Panc1 (cell line): ENCODE measurements at regions of chr1 and their contacts with region 1.

Region 1: DNA sequence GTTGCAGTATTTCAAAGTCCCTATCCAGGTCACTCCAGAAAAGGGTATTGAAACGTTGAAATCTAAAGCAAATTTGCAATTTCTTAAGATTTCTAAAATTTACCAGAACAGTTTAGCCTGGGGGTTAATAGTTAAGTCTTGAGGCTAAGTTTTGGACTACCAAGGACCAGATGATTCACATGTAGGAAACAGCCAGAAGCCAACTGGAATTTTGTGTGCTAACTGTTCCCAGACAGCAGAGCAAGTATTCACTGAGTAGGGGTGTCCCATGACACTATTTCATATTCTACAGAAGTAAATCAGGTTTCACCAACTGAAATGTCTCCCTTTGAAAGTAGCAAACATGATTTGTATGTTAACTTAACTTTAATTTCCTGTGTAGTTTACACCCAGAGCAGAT is 11.5 kb upstream of the C1orf105 start:
- DNase-seq: no peak
- ATAC-seq: no peak
- H3K4me3 ChIP-seq: no peak overlapping the region
- H3K27ac ChIP-seq: no peak overlapping the region
- H3K4me1 ChIP-seq: no peaks in the 10 kb centered on the region
- H3K27me3 ChIP-seq: no peaks in the 10 kb centered on the region
- CTCF ChIP-seq: no peak

Region 2: DNA sequence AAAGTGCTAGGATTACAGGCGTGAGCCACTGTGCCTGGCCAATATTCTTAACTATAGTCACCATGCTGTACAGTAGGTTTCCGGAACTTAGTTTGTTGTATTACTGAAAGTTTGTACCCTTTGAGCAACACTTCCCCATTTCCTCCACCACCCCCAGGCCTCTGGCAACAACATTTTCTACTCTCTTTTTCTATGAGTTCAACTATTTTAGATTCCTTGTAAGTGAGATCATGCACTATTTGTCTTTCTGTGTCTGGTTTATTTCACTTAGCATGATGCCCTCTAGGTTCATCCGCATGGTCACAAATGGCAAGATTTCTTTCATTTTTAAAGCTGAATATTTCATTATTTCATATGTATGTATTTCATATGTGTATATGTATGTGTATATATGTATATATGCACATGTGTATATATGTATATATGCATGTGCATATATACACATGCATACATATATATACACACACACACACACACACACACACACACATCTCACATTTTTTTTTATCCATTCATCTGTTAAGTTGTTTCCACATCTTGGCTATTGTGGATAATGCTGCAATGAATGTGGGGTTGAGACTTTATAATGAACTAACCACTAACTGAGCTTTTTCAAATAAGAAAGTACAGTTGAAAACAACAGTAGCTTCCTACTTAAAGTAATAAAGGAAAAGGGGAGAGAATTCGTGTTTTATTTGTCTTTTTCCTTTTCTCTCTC is 245.3 kb before region 1 on chr1:
- CTCF ChIA-PET with region 1: no interaction called
- POLR2A ChIA-PET with region 1: interaction called, 10 read pairs
- in situ Hi-C with region 1: no loop called
- intact Hi-C with region 1: no loop called
- DNase-seq: no peak
- ATAC-seq: no peak
- H3K4me3 ChIP-seq: no peak overlapping the region
- H3K27ac ChIP-seq: no peak overlapping the region; the same call in 1 of the 2 replicates
- H3K4me1 ChIP-seq: no peaks in the 10 kb centered on the region
- H3K27me3 ChIP-seq: no peaks in the 10 kb centered on the region
- CTCF ChIP-seq: no peak

Region 3: DNA sequence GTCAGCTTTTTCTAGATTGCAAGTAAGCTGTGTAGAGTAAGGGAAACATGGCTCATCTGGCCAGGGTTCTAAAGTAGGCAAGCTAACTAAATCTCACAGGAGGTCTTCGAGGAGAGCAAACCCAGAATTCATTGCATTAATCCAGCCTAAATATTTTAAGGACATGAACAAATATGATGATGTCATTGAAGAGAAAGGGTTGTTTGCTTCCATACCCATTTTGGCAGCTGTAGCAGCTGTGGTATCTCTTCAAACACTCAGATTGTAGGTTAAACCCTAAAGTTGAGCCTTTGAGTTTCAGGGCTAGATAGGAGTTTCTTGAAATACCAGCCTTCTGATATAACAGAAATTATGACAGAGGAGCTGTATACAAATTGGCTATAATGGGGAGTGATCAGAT is 189.0 kb before region 1 on chr1:
- CTCF ChIA-PET with region 1: no interaction called
- POLR2A ChIA-PET with region 1: interaction called, 14 read pairs
- in situ Hi-C with region 1: no loop called
- intact Hi-C with region 1: no loop called
- DNase-seq: no peak
- ATAC-seq: no peak
- H3K4me3 ChIP-seq: no peak overlapping the region
- H3K27ac ChIP-seq: peak overlapping the region; percentile 6; the same call in 1 of the 2 replicates
- H3K4me1 ChIP-seq: no peaks in the 10 kb centered on the region
- H3K27me3 ChIP-seq: no peaks in the 10 kb centered on the region
- CTCF ChIP-seq: no peak